GM12878 (cell line): ENCODE measurements at regions of chr22 and their contacts with region 1.

Region 1: GRCh38 chr22:31451709-31452571 is 37.7 kb downstream of the EIF4ENIF1 start:
- DNase-seq: peak; percentile 15
- ATAC-seq: peak; percentile 92
- H3K4me3 ChIP-seq: no peak overlapping the region
- H3K27ac ChIP-seq: no peak overlapping the region
- H3K4me1 ChIP-seq: peaks cover 6% of the 10 kb centered on the region
- H3K27me3 ChIP-seq: no peaks in the 10 kb centered on the region
- CTCF ChIP-seq: peak; percentile 59 to 63 (median 59)
- EP300 ChIP-seq: no peak
- POLR2A ChIP-seq: no peak
- RAD21 ChIP-seq: peak; percentile 59

Region 2: GRCh38 chr22:31477329-31477728 is 25.4 kb after region 1 on chr22:
- CTCF ChIA-PET with region 1: interaction called, 10 read pairs
- POLR2A ChIA-PET with region 1: no interaction called
- RAD21 ChIA-PET with region 1: interaction called, 4 read pairs
- SMC1A ChIA-PET with region 1: interaction called, 4 read pairs
- in situ Hi-C with region 1: no loop called
- intact Hi-C with region 1: no loop called
- DNase-seq: peak; percentile 56
- ATAC-seq: peak; percentile 98
- H3K4me3 ChIP-seq: no peak overlapping the region
- H3K27ac ChIP-seq: peak overlapping the region; percentile 65
- H3K4me1 ChIP-seq: peaks cover 19% of the 10 kb centered on the region
- H3K27me3 ChIP-seq: no peaks in the 10 kb centered on the region
- CTCF ChIP-seq: no peak
- EP300 ChIP-seq: peak in 1 of 2 experiments; percentile 33; a peak in 1 of 4 replicates
- POLR2A ChIP-seq: no peak
- RAD21 ChIP-seq: no peak

Region 3: GRCh38 chr22:31630331-31631329 is 178.7 kb after region 1 on chr22:
- CTCF ChIA-PET with region 1: interaction called, 30 read pairs
- POLR2A ChIA-PET with region 1: no interaction called
- RAD21 ChIA-PET with region 1: interaction called, 12 read pairs
- SMC1A ChIA-PET with region 1: interaction called, 16 read pairs
- in situ Hi-C with region 1: no loop called
- intact Hi-C with region 1: loop called (anchors 1 kb)
- DNase-seq: no peak
- ATAC-seq: peak; percentile 81
- H3K4me3 ChIP-seq: peak overlapping the region; percentile 93
- H3K27ac ChIP-seq: peak overlapping the region; percentile 83
- H3K4me1 ChIP-seq: peaks cover 38% of the 10 kb centered on the region
- H3K27me3 ChIP-seq: no peaks in the 10 kb centered on the region
- CTCF ChIP-seq: peak in 1 of 3 experiments; percentile 17; a peak in 2 of 6 replicates
- EP300 ChIP-seq: no peak
- POLR2A ChIP-seq: peak; percentile 58; the same call in 1 of the 2 replicates
- RAD21 ChIP-seq: no peak

Region 4: DNA sequence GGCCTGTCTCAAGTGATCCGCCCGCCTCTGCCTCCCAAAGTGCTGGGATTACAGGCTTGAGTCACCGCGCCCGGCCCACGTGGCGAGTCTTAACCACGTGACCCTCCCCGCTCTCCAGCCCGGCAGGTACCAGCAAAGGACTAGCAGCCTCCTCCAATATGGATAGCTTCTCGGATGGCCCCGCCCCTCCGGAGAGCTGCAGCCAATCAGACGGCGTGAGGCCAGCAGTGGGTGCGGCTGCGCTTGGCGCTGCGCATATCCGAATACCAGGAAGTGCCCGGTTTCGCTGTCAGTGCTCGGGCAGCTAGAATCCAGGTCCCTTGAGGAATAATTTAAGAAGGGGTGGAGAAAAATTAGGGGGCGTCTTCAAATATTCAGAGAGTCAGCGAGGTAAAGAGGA is 224.8 kb after region 1 on chr22:
- CTCF ChIA-PET with region 1: no interaction called
- POLR2A ChIA-PET with region 1: no interaction called
- RAD21 ChIA-PET with region 1: no interaction called
- SMC1A ChIA-PET with region 1: no interaction called
- in situ Hi-C with region 1: no loop called
- intact Hi-C with region 1: no loop called
- DNase-seq: peak; percentile 66
- ATAC-seq: peak; percentile 100
- H3K4me3 ChIP-seq: peak overlapping the region; percentile 58
- H3K27ac ChIP-seq: peak overlapping the region; percentile 14
- H3K4me1 ChIP-seq: peaks cover 2% of the 10 kb centered on the region; the same call in 1 of the 2 replicates
- H3K27me3 ChIP-seq: no peaks in the 10 kb centered on the region
- CTCF ChIP-seq: no peak
- EP300 ChIP-seq: no peak
- POLR2A ChIP-seq: peak; percentile 74
- RAD21 ChIP-seq: no peak